AG04449 (cell line): ENCODE measurements at regions of chr17 and their contacts with region 1.

Region 1: DNA sequence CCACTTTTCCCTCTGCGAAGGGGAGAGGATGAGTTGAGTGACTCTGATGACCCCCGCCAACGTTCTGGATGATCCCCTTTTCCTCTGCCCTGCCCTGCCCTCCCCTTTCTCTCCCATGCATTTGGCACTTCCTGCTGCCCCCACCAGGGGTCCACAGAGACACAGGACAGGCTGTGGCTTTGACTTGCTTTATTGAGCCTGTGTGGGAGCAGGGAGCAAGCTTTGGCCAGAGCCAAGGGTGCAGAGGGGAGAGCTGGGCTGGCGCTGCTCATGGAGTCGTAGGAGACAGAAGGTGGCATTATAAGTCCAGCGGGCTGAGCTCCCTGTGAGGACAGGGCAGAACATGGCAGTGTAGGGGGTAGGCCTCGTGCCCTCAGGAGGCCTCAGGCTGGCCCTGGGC is 1.6 kb downstream of the PPY start:
- DNase-seq: no peak
- H3K4me3 ChIP-seq: no peak overlapping the region
- CTCF ChIP-seq: peak; percentile 84

Region 2: GRCh38 chr17:43878260-43879175 is 62.1 kb before region 1 on chr17:
- CTCF ChIA-PET with region 1: interaction called, 18 read pairs
- POLR2A ChIA-PET with region 1: no interaction called
- DNase-seq: peak; percentile 65
- H3K4me3 ChIP-seq: no peak overlapping the region
- CTCF ChIP-seq: peak; percentile 100

Region 3: GRCh38 chr17:43898446-43898845 is 42.2 kb before region 1 on chr17:
- CTCF ChIA-PET with region 1: no interaction called
- POLR2A ChIA-PET with region 1: no interaction called
- DNase-seq: no peak
- H3K4me3 ChIP-seq: no peak overlapping the region
- CTCF ChIP-seq: no peak

Region 4: GRCh38 chr17:43927060-43927864 is 13.4 kb before region 1 on chr17:
- CTCF ChIA-PET with region 1: interaction called, 49 read pairs
- POLR2A ChIA-PET with region 1: no interaction called
- DNase-seq: no peak
- H3K4me3 ChIP-seq: no peak overlapping the region; the same call in 1 of the 2 replicates
- CTCF ChIP-seq: no peak

Region 5: GRCh38 chr17:43958953-43959352 is 18.3 kb after region 1 on chr17:
- CTCF ChIA-PET with region 1: interaction called, 42 read pairs
- POLR2A ChIA-PET with region 1: no interaction called
- DNase-seq: no peak
- H3K4me3 ChIP-seq: no peak overlapping the region
- CTCF ChIP-seq: no peak

Region 6: DNA sequence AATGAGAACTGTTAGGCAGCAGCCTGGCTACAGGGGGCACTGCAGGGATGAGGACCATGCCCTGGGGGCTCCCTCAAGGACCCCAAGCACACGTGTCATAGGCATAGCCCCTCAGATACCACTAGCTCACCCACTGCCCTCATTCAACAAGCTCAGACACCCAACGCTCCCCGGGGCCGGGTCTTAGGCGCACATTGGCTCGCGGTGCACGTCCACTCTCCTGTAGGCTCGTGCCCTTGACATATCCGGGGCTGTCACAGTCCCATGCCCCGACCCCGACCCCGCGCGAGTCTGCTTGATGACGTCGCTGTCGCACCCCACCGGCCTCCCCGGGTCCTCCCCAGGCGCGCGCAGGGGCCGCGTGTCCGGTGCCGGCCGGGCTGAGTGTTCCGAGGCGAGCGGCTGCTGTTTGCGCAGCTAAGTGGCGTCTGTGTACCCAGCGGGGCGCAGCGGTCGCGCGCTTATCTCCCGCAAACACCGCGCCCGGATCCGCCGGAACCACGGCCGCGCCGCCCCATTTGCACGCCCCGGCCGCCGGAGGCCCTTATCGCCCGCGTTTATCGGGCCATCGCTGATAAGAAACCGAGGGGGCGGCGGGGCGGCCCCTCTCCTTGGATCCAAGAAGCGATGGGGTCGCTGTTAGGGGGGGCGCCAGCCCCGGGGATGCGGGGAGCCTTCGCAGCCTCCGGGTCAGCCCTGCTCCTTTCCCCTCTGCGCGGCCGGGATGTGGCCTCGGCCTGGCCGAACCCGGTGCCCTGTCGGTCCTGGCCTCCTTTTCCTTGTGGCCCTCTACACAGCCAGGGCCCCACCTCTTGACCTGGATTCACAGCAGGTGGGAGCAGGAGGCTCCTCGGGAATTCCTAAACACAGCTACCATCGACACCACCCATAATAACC is 43.1 kb after region 1 on chr17:
- CTCF ChIA-PET with region 1: interaction called, 34 read pairs
- POLR2A ChIA-PET with region 1: no interaction called
- DNase-seq: no peak
- H3K4me3 ChIP-seq: peak overlapping the region; percentile 43
- CTCF ChIP-seq: peak; percentile 16

Region 7: DNA sequence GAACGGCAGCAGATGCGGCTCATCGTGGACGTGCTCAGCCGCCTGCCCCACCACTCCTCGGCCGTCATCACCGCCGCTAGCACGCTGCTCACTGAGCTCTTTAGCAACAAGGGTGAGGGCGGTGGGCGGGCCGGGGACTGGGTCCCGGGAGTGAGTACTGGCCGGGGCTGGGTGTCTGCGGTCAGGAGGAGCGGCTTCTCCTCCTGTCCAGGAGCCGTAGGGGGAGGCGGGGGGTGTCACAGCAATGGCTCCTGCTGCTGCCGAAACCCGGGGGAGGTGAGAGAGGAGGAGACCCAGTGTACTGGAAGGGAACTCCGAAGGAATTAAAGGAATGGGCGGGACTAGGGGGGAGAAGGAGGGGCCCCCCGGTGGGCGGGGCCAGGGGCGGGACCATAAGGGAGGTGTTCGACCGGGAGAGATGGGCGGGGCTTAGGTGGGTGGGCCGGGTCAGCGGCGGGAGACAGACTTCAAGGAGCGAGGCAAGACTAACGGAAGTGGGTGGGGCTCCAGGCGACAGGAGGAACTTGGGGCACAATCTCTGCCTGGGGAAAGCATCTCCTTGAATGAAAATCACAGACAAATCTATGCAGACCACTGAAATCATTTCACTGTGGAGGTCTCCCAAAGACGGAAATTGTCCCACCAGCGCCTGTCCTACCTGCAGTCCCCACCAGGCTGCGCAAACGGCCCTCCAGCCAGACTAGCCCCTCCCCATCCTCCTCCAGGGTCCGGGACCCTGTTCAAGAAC is 66.1 kb after region 1 on chr17:
- CTCF ChIA-PET with region 1: interaction called, 320 read pairs
- POLR2A ChIA-PET with region 1: no interaction called
- DNase-seq: peak; percentile 71
- H3K4me3 ChIP-seq: peak overlapping the region; percentile 84
- CTCF ChIP-seq: peak; percentile 82

Region 8: DNA sequence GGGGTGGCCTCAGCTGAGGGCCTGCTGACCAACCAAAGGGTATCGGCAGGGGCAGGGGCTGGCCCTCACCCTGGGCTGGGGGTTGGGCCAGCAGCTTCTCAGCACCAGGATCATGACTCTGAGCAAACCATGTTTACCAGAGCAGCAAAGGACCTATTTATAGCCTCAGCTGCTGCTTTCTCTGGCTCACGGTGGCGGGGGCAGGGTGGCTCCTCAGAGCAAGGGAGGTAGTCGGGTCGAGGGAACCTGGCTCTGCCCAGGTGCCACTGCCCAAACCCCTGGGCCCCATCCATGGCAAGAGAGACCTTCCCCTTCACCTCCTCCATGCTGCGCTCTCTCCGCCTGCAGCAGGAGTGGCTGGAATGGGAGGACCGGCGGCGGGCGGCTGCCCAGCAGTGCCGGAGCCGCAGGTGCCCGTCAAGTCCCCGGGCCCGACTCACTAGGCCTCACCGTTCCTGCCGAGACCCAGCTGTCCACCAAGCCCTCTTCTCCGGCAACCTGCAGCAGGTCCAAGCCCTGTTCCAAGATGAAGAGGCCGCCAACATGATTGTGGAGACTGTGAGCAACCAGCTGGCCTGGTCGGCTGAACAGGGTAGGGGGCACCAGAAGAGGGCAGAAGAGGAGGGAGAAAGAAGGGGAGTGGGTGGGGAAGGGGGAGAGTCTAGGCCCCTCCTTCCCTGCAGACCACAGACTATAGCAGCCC is 230.0 kb after region 1 on chr17 and contains the start of gene ASB16:
- CTCF ChIA-PET with region 1: interaction called, 74 read pairs
- POLR2A ChIA-PET with region 1: no interaction called
- DNase-seq: no peak
- H3K4me3 ChIP-seq: no peak within 1 kb of the TSS
- CTCF ChIP-seq: no peak